ENCODE measurements at regions of chr19 and their contacts with region 1.

Region 1: DNA sequence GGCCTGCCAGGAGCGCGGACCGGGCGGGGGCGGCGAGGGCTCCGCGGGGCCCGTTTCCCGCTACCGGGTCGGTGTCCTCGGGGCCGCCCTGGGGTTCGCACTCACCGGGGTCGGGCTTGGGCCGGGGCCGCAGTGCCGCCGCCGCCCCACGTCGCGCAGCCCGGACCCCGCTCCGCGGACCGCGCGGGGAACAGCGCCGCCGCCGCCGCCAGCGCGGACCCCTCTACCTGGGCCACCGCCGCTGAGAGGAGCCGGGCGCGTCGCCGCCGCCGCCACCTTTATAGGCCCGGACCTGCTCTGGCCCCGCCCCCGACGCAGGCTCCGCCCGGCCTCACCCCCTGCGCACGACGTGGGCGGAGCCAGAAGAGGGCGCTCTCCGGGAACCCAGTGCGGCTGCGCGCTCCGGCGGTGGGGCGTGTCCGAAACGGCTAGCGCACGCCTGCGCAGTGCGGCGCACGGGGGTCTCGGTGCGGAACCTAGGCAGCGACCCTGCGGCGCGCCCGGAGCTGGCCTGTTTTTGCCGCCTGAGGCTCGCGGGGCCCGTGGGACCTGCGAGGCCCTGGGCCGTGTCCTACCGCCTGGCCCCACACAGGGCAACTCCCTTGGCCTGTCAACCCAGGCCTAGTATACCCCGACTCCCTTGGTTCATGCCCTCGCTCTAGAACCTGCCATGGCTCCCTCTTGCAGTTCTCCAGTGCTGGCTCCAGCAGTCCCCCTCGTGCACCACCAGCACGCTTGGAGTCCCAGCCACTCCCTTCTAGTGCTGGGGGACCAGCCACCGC is at the start of gene MKNK2:
- DNase-seq: peak; percentile 98
- ATAC-seq: peak; percentile 80
- H3K4me3 Mint-ChIP-seq: peak within 1 kb of the TSS; percentile 82
- H3K27ac Mint-ChIP-seq: peak within 1 kb of the TSS; percentile 94
- H3K4me1 Mint-ChIP-seq: peaks cover 51% of the 10 kb centered on the region
- H3K27me3 Mint-ChIP-seq: no peaks in the 10 kb centered on the region
- total RNA-seq, gene MKNK2: 139 to 155 TPM

Region 2: DNA sequence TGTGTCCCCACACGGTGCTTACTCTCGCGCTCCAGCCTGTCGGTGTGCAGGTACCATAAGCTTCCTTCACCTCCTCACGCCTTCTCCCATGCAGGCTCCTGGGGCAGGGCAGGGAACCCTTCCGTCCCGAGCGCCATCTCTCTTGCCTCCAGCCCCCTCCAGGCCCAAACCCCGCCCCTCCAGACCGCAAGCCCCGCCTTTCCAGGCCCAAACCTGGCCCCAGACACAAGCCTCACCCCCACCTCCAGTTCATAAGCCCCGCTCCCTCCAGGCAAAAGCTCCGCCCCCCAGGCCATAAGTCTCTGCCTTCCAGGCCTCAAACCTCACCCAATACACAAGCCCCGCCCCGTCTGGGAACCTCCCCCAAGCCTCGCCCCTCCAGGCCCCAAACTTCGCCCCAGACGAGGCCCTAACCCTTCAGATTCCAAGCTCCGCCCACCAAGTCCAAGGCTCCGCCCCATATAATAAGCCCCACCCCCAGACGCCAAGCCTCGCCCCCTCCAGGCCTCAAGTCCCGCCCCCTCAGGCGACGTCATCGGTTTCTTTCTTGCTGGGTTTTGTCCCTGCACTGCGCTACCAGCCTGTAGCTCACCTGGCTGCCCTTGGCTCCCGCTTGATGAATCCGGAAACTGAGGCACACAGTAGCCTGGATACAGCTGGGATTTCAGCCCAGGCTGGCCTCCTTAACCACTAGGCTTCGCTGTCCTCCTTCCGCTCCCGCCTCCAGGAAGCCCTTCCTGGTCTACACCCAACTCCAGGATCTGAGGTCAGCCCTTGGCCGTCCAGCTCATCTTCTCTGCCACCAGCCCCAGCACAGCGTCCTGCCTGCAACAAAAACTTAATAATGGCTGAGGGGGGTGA is 16.2 kb before region 1 on chr19:
- CTCF ChIA-PET with region 1: interaction called, 4 read pairs
- POLR2A ChIA-PET with region 1: interaction called, 20 read pairs
- intact Hi-C with region 1: no loop called
- DNase-seq: peak; percentile 90
- ATAC-seq: peak; percentile 70
- H3K4me3 Mint-ChIP-seq: no peak overlapping the region
- H3K27ac Mint-ChIP-seq: no peak overlapping the region
- H3K4me1 Mint-ChIP-seq: peaks cover 31% of the 10 kb centered on the region
- H3K27me3 Mint-ChIP-seq: no peaks in the 10 kb centered on the region

Region 3: DNA sequence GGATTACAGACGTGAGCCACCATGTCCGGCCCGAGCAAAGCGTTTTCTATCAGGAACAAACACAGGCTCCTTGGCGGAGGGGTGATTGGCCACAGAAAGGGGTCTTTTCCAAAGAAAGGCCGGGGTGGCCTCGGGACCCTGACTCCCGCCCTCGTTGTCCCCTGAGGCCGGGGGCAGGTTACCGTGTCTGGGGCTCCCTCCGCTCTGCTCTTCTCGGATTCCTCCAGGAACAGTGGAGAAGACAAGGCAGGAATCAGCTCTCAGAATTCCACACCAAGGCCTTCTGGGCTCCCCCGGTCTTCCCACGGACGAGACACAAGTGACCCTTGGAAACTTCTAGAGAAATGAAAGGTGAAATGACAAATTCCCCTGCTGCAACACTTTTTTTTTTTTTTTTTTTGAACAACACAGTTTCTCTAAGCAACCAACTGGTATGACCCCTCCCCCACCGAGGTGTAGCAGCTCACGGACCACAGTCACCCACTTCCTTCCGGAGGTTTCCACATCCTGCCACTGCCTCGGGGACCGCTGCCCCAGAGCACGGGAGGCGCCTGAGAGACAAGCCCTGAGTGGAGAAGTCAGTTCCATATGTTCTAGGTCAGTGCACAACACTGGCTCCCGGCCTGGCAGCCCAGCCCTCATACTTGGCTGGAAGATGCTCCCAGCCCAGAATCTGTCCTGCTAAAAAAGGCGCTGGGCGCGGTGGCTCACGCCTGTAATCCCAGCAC is 34.0 kb after region 1 on chr19:
- CTCF ChIA-PET with region 1: no interaction called
- POLR2A ChIA-PET with region 1: no interaction called
- intact Hi-C with region 1: loop called (anchors 2 kb)
- DNase-seq: peak; percentile 97
- ATAC-seq: peak; percentile 64
- H3K4me3 Mint-ChIP-seq: peak overlapping the region; percentile 96
- H3K27ac Mint-ChIP-seq: peak overlapping the region; percentile 99
- H3K4me1 Mint-ChIP-seq: peaks cover 57% of the 10 kb centered on the region
- H3K27me3 Mint-ChIP-seq: no peaks in the 10 kb centered on the region

Region 4: DNA sequence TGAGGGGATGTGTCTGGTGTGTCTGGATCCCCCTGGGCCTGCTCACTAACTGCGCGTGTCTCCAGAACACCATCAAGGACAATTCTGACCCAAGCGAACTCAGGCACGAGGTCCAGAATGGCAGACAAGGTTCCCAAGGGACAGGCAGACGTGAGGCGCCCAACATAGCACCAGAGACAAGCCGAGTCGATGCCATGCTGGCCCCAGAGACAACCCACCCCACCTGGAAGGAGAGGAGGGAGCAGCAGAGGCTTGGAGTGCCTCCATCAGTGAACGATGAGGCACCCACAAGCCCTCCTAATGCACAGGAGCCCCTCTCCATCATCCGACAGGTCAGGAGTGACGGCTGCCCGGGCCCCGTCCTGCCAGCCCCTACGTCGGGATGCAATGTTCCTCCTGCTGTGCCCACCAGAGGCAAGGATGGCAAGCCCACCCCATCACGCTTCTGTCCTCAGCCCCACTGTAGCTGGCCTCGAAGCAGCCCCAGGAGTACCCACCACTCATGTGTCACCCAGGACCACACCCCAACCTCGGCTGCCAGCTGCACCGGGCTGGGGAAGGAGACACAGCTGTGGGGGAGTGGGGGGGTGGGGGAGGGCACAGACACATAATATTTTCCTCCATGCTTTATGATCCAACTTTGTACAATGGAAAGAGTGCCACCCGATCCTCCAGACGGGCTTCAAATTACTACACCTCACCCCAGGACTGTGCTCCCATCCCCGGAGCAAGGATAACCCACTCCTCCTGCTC is 88.4 kb after region 1 on chr19:
- CTCF ChIA-PET with region 1: no interaction called
- POLR2A ChIA-PET with region 1: no interaction called
- intact Hi-C with region 1: no loop called
- DNase-seq: no peak
- ATAC-seq: no peak
- H3K4me3 Mint-ChIP-seq: no peak overlapping the region
- H3K27ac Mint-ChIP-seq: no peak overlapping the region
- H3K4me1 Mint-ChIP-seq: no peaks in the 10 kb centered on the region
- H3K27me3 Mint-ChIP-seq: no peaks in the 10 kb centered on the region

Measured in activated CD4-positive, alpha-beta T cell treated with anti-CD3 and anti-CD28 coated beads for 36 hours (primary cell).